SK-N-SH (cell line): ENCODE measurements at regions of chr4 and their contacts with region 1.

Region 1: GRCh38 chr4:189792924-189793618 is 147.6 kb upstream of the FRG1 start:
- DNase-seq: peak; percentile 71
- H3K4me3 ChIP-seq: peak overlapping the region in 1 of 2 experiments; percentile 42; a peak in 1 of 4 replicates
- H3K27ac ChIP-seq: no peak overlapping the region
- H3K4me1 ChIP-seq: peaks cover 0 to 6% of the 10 kb centered on the region in 2 experiments; a peak in 1 of 4 replicates
- H3K27me3 ChIP-seq: no peaks in the 10 kb centered on the region
- CTCF ChIP-seq: peak; percentile 86
- EP300 ChIP-seq: no peak
- RAD21 ChIP-seq: peak; percentile 96

Region 2: GRCh38 chr4:189124149-189124758 is 668.8 kb before region 1 on chr4:
- CTCF ChIA-PET with region 1: interaction called, 17 read pairs
- POLR2A ChIA-PET with region 1: no interaction called
- DNase-seq: peak; percentile 40
- H3K4me3 ChIP-seq: peak overlapping the region in 1 of 2 experiments; percentile 34; a peak in 1 of 4 replicates
- H3K27ac ChIP-seq: no peak overlapping the region
- H3K4me1 ChIP-seq: no peaks in the 10 kb centered on the region
- H3K27me3 ChIP-seq: no peaks in the 10 kb centered on the region
- CTCF ChIP-seq: peak; percentile 72
- EP300 ChIP-seq: no peak
- RAD21 ChIP-seq: peak; percentile 87

Region 3: GRCh38 chr4:189516902-189517301 is 276.2 kb before region 1 on chr4:
- CTCF ChIA-PET with region 1: no interaction called
- POLR2A ChIA-PET with region 1: no interaction called
- DNase-seq: no peak
- H3K4me3 ChIP-seq: no peak overlapping the region
- H3K27ac ChIP-seq: no peak overlapping the region
- H3K4me1 ChIP-seq: peaks cover 0 to 3% of the 10 kb centered on the region in 2 experiments; a peak in 1 of 4 replicates
- H3K27me3 ChIP-seq: no peaks in the 10 kb centered on the region
- CTCF ChIP-seq: no peak
- EP300 ChIP-seq: no peak
- RAD21 ChIP-seq: no peak

Region 4: DNA sequence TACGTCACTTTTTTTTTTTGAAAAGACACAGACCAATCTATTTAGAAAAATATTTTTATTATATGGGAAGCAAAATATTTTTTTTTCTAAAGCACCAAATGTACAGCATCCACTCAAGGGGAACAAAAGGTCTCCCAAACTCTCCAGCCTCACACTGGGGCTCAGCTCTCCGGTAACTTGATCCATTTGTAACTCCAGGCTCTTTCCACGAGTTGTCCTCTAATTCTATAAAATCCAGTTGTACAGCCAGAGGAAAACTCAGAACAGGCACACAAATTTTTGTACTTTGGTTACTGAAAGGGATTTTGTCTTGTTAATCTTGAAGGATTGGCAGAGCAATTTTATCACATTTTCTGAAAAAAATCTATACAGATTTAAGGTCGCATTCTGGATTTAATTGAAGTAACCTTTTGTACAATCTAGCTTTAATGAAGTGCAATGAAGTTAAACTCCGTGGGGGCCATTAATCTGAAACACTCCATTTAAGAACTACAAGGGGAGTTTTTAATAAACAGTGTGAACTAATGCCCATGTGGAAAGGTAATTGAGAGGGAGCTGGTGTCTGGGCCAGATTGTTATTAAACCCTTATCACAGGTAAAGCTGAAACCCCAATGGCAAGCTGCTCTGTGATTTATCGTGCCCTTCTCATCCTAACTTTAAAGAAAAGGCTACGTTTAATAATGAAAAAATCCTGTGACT is 13.6 kb before region 1 on chr4:
- CTCF ChIA-PET with region 1: interaction called, 13 read pairs
- POLR2A ChIA-PET with region 1: no interaction called
- DNase-seq: no peak
- H3K4me3 ChIP-seq: no peak overlapping the region
- H3K27ac ChIP-seq: no peak overlapping the region
- H3K4me1 ChIP-seq: no peaks in the 10 kb centered on the region
- H3K27me3 ChIP-seq: no peaks in the 10 kb centered on the region
- CTCF ChIP-seq: no peak
- EP300 ChIP-seq: no peak
- RAD21 ChIP-seq: no peak

Region 5: DNA sequence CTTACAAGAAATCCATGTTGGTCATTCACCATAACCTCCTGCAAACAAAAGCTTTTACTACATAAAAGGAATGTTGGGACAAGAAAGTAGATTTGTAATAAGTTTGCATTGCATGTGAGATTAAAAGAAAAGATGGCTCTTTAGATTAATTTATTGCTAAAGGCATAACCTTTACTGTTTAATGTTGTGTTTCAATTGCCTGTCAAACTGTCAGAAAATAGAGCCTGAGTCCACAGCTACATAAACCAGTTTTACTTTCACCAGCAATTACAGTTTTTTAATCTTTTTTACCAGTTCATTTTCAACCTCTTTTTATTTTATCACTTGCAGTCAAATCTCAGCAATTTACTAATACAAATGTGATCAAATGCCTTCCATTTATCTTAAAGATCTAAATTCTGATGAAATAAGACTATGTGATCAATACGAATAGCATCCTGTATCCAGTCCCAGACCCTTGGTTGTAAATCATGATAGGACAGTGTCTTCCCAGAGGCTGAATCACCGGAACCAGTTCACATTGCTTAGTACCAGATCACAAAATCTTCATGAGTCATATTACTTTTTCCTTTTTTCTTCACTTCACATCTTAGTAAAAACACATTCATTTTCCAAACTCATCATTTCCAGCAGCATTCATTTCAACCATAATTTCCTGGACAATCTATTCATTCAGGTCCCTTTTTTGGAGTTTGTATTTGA is 52.2 kb after region 1 on chr4:
- CTCF ChIA-PET with region 1: no interaction called
- POLR2A ChIA-PET with region 1: no interaction called
- DNase-seq: no peak
- H3K4me3 ChIP-seq: peak overlapping the region; percentile 33 to 50
- H3K27ac ChIP-seq: no peak overlapping the region; a peak in 1 of 4 replicates
- H3K4me1 ChIP-seq: no peaks in the 10 kb centered on the region; a peak in 2 of 4 replicates
- H3K27me3 ChIP-seq: no peaks in the 10 kb centered on the region
- CTCF ChIP-seq: no peak
- EP300 ChIP-seq: peak; percentile 23 to 74; a peak in 2 of 4 replicates
- RAD21 ChIP-seq: no peak